ENCODE measurements at regions of chr3 and their contacts with region 1.

Region 1: DNA sequence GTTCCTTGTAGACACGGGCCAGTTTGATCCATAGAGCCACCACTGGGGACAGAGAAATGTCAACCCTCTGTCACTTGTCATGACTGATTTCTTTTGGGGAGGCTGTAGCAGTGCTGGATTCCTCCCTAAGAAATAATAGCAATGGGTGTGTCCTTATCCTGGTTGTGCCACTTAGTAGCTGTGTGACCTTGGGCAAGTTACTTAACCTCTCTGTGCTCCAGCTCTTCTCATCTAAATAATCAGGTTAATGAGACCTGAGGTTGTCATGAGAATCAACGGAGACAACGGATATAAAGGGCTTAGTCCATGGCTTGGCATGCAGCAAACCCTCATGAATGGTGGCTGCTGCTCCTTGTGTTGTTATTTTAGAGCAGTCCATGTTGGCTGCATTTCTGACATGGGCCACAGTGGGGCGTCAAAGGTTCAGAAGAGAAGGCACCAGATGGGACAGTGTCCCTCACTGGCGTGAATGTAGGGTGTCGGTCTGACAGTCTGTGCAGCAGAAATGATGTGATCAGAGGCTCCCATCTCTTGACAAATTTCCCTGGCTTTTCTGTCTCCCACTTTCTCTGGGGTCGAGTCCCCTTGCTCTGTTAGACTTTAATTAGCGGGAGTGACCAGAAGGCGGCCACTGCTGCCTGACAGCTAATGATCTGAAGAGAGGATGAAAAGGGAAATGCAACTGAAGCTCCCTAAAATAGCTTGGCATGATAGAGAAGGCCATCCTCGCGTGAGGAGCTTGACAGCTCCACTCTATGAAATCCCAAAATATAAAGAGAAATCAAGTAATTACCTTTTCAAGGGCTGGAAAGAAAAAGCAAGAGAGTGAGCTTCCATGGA is 209.4 kb downstream of the CADPS start:
- DNase-seq: peak; percentile 61
- ATAC-seq: peak; percentile 83

Region 2: DNA sequence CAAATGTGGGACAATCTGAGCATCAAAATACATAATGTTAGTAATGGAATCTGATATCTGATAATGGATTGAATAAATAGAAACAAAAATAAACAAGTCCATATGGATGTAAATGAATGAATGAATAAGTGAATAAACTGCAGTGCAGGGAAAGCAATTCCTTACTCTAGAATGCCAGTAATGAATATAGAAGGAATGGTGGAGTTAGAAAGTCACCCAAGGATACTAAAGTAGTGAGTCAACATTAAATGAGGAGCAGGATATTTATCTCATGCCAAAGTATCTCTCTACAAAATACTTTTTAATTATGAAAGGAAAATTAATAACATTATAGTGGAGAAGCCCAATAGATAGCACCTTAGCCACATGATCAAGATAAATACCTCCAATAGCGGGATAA is 592.8 kb before region 1 on chr3:
- intact Hi-C with region 1: no loop called
- DNase-seq: no peak
- ATAC-seq: no peak

Region 3: DNA sequence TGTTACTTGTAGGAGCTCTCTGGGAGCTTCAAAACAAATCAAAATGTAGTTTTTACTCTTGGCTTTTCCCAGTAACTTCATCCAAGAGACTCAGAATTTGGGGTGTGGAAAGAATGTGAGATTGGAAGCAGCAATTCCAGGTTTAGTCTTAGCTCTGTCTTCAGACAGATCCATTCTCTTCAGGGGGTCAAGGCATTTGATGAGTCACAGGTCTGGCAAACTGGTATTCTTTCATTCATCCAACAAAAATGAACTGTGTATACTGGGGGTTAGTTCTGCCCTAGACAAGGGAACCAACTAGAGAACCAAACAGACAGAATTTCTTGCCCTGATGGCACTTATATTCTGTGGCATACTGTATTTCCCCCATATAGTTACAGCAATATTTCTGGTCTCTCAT is 245.7 kb after region 1 on chr3:
- intact Hi-C with region 1: no loop called
- DNase-seq: no peak
- ATAC-seq: no peak

Region 4: DNA sequence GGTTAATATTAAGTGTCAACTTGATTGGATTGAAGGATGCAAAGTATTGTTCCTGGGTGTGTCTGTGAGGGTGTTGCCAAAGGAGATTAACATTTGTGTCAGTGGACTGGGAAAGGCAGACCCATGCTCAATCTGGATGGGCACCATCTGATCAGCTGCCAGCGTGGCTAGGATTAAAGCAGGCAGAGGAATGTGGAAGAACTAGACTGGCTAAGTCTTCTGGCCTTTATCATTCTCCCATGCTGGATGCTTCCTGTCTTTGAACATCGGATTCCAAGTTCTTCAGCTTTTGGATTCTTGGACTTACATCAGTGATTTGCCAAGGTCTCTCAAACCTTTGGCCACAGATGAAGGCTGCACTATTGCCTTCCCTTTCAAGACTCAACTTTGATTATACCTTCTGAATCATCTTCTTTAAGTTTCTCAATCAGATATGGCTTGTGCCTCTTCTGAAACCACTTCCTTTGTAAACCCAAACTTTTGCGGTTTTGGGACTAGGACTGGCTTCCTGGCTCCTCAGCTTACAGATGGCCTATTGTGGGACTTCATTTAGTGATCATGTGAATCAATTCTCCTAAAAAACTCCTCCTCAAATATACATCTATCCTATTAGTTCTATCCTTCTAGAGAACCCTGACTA is 256.4 kb after region 1 on chr3:
- intact Hi-C with region 1: loop called (anchors 5 kb)
- DNase-seq: no peak
- ATAC-seq: no peak

Region 5: GRCh38 chr3:63193629-63194028 is 527.8 kb after region 1 on chr3:
- intact Hi-C with region 1: loop called (anchors 2 kb)
- DNase-seq: no peak
- ATAC-seq: no peak

Region 6: GRCh38 chr3:63228087-63229023 is 562.5 kb after region 1 on chr3:
- intact Hi-C with region 1: loop called (anchors 10 kb)
- DNase-seq: no peak
- ATAC-seq: no peak